ENCODE measurements at regions of chr19 and their contacts with region 1.

Region 1: GRCh38 chr19:58499021-58499927 is 12.5 kb downstream of the SLC27A5 start:
- DNase-seq: peak; percentile 83 to 97 (median 95)
- ATAC-seq: peak; percentile 86
- H3K4me3 ChIP-seq: peak overlapping the region; percentile 64
- H3K4me3 Mint-ChIP-seq: peak overlapping the region; percentile 92
- H3K27ac ChIP-seq: peak overlapping the region; percentile 22 to 88
- H3K27ac Mint-ChIP-seq: peak overlapping the region; percentile 96
- H3K4me1 ChIP-seq: peaks cover 17% of the 10 kb centered on the region
- H3K4me1 Mint-ChIP-seq: peaks cover 25% of the 10 kb centered on the region
- H3K27me3 ChIP-seq: no peaks in the 10 kb centered on the region
- H3K27me3 Mint-ChIP-seq: no peaks in the 10 kb centered on the region
- CTCF ChIP-seq: no peak

Region 2: GRCh38 chr19:58326914-58327726 is 172.2 kb before region 1 on chr19 and contains the start of gene ZSCAN22:
- CTCF ChIA-PET with region 1: no interaction called
- POLR2A ChIA-PET with region 1: no interaction called
- intact Hi-C with region 1: loop called in 1 of 2 experiments (anchors 1 kb)
- DNase-seq: peak; percentile 76 to 94 (median 89)
- ATAC-seq: peak; percentile 78
- H3K4me3 ChIP-seq: peak within 1 kb of the TSS; percentile 84 to 96
- H3K4me3 Mint-ChIP-seq: no peak within 1 kb of the TSS
- H3K27ac ChIP-seq: peak within 1 kb of the TSS; percentile 77 to 96
- H3K27ac Mint-ChIP-seq: no peak within 1 kb of the TSS
- H3K4me1 ChIP-seq: peaks cover 19% of the 10 kb centered on the region
- H3K4me1 Mint-ChIP-seq: peaks cover 3% of the 10 kb centered on the region
- H3K27me3 ChIP-seq: no peaks in the 10 kb centered on the region
- H3K27me3 Mint-ChIP-seq: no peaks in the 10 kb centered on the region
- CTCF ChIP-seq: no peak
- total RNA-seq, gene ZSCAN22: 1.7 to 2.2 TPM

Region 3: DNA sequence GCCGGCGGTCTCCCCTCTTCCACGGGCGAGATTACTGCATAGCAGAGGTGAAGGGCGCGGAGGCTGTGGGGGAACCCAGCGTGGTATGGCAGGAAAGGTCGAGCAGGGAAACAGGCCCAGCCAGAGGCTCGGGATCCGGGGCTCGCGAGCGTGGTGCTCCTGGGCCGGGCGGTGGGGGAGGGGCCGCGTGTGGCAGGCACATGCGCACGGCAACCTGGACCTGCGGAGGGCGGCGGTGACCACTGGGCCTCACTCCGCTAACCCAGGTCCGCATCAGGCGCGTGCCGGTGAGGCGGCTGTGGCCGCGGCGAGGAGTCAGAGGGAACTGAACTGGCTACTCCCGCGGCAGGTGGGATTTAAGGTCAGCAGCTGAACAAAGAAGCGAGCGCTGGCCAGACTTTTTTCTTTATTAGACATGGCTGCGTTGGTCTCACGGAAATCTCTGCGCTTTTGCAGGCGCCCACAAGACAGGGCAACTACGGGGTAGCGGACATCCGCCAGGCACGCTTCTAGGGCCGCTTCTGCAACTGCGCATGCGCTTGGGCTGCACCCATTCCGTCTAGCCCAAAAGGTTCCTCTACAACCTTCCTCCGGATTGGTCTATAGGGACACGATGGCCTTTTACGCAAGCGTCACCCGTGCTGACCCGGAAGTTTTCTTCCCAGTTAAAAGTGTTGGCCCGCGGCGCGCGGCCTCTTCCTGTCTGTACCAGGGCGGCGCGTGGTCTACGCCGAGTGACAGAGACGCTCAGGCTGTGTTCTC is 112.5 kb before region 1 on chr19 and contains the start of gene RPS5:
- CTCF ChIA-PET with region 1: no interaction called
- POLR2A ChIA-PET with region 1: no interaction called
- intact Hi-C with region 1: loop called in 1 of 2 experiments (anchors 1 kb)
- DNase-seq: peak; percentile 92 to 100 (median 95)
- ATAC-seq: peak; percentile 88
- H3K4me3 ChIP-seq: peak within 1 kb of the TSS; percentile 88 to 90
- H3K4me3 Mint-ChIP-seq: peak within 1 kb of the TSS; percentile 93
- H3K27ac ChIP-seq: peak within 1 kb of the TSS; percentile 94 to 98
- H3K27ac Mint-ChIP-seq: peak within 1 kb of the TSS; percentile 99
- H3K4me1 ChIP-seq: peaks cover 41% of the 10 kb centered on the region
- H3K4me1 Mint-ChIP-seq: peaks cover 52% of the 10 kb centered on the region
- H3K27me3 ChIP-seq: no peaks in the 10 kb centered on the region
- H3K27me3 Mint-ChIP-seq: no peaks in the 10 kb centered on the region
- CTCF ChIP-seq: no peak
- total RNA-seq, gene RPS5: 1,884 to 1,887 TPM

Region 4: GRCh38 chr19:58451358-58452101 is 47.7 kb before region 1 on chr19 and contains the start of gene ZNF324B:
- CTCF ChIA-PET with region 1: no interaction called
- POLR2A ChIA-PET with region 1: no interaction called
- intact Hi-C with region 1: loop called in 1 of 2 experiments (anchors 1 kb)
- DNase-seq: peak; percentile 92 to 98 (median 96)
- ATAC-seq: peak; percentile 96
- H3K4me3 ChIP-seq: peak within 1 kb of the TSS; percentile 55 to 83
- H3K4me3 Mint-ChIP-seq: peak within 1 kb of the TSS; percentile 82
- H3K27ac ChIP-seq: peak within 1 kb of the TSS; percentile 44 to 70
- H3K27ac Mint-ChIP-seq: peak within 1 kb of the TSS; percentile 27
- H3K4me1 ChIP-seq: peaks cover 10% of the 10 kb centered on the region
- H3K4me1 Mint-ChIP-seq: peaks cover 16% of the 10 kb centered on the region
- H3K27me3 ChIP-seq: peaks cover 0 to 9% of the 10 kb centered on the region in 2 experiments
- H3K27me3 Mint-ChIP-seq: peaks cover 9% of the 10 kb centered on the region
- CTCF ChIP-seq: no peak
- total RNA-seq, gene ZNF324B: 6.2 to 6.5 TPM

Region 5: GRCh38 chr19:58466760-58467589 is 32.3 kb before region 1 on chr19 and contains the start of gene ZNF324:
- CTCF ChIA-PET with region 1: no interaction called
- POLR2A ChIA-PET with region 1: no interaction called
- intact Hi-C with region 1: loop called (anchors 1 to 2 kb)
- DNase-seq: peak; percentile 93 to 99 (median 98)
- ATAC-seq: peak; percentile 88
- H3K4me3 ChIP-seq: peak within 1 kb of the TSS; percentile 63 to 93
- H3K4me3 Mint-ChIP-seq: peak within 1 kb of the TSS; percentile 87
- H3K27ac ChIP-seq: peak within 1 kb of the TSS; percentile 88 to 91
- H3K27ac Mint-ChIP-seq: peak within 1 kb of the TSS; percentile 89
- H3K4me1 ChIP-seq: peaks cover 10% of the 10 kb centered on the region
- H3K4me1 Mint-ChIP-seq: peaks cover 25% of the 10 kb centered on the region
- H3K27me3 ChIP-seq: peaks cover 0 to 3% of the 10 kb centered on the region in 2 experiments
- H3K27me3 Mint-ChIP-seq: no peaks in the 10 kb centered on the region
- CTCF ChIP-seq: no peak
- total RNA-seq, gene ZNF324: 26.9 to 30.5 TPM

Measured in CD8-positive, alpha-beta T cell (primary cell).